ENCODE measurements at regions of chr3 and their contacts with region 1.

Region 1: DNA sequence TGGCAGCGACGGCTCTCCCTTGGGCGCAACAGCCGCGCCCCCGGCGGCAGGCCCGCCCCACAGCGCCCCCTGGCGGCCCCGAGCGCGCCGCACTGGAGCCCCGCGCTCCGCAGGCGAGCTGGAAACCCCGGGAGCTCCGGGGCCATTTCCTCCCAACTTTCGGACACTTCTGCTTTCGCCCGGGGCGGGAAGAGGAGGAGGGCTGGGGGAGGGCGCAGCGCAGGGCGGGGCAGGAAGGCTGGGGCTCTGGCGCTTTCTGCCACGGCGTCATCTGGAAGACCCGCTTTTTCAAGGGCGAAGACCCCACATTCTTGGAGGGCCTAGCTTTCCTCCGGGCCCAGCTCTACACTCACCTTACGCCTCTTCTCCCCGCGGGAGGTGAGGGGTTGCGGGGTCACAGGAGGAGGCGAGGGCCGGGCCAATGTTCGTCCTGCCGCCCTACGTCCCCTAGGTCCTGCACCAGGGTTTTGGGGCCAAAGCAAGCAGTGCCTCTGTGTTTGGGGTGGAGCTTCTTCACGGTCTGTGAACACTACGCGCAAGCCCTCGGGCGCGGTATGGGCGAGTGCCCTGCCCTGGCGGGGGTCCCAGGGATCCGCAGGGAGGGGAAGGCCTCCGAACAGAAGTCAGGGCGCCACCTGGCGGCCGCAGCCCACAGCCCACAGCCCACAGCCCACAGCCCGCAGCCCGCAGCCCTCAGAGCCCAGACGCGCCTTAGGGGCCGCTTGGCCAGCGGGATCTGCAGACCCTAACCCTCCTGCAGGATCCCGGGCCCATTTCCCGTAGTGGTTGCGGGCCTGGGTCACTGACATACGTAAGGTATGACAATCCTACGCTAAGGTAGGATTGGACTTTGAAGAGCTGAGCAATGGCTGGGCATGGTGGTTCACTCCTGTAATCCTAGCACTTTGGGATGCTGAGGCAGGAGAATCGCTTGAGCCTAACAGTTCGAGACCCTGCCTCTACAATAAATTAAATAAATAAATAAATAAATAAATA is 31.1 kb downstream of the FOXL2 start:
- DNase-seq: peak; percentile 95
- H3K4me3 ChIP-seq: peak overlapping the region; percentile 80
- H3K27ac ChIP-seq: peak overlapping the region; percentile 96
- H3K4me1 ChIP-seq: peaks cover 19% of the 10 kb centered on the region
- H3K27me3 ChIP-seq: no peaks in the 10 kb centered on the region
- CTCF ChIP-seq: peak; percentile 80

Region 2: GRCh38 chr3:138694287-138695007 is 221.4 kb before region 1 on chr3:
- intact Hi-C with region 1: loop called (anchors 5 kb)
- DNase-seq: no peak
- H3K4me3 ChIP-seq: no peak overlapping the region
- H3K27ac ChIP-seq: no peak overlapping the region
- H3K4me1 ChIP-seq: no peaks in the 10 kb centered on the region
- H3K27me3 ChIP-seq: no peaks in the 10 kb centered on the region
- CTCF ChIP-seq: no peak

Region 3: DNA sequence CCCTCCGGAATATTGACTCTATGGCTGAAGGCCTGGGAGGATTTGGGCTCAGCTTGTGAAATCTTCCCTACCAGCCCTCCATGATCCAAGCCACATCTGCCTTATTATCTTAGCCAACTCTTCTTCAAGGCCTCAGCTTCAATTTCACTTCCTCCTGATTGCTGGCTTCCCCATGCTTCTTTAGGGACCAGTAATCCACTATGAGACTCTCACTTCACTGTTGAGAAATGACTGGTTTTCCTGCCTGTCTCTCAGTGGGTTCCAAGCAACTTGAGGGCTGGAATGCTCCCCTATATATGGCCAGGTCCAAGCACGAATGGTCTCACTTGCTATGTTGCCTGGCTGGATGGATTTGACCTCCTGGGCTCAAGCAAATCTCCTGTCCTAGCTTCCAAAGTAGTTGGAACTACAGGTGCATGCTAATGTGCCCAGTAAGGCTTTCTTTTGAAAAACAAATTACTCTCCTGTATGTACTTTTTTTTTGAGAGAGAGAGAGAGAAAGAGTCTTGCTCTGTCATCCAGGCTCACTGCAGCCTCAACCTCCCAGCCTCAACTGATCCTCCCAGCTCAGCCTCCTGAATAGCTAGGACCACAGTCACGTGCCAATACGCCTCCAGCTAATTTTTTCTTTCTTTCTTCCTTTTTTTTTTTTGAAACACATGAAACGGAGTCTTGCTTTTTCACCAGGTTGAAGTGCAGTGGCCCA is 73.2 kb before region 1 on chr3:
- intact Hi-C with region 1: no loop called
- DNase-seq: no peak
- H3K4me3 ChIP-seq: no peak overlapping the region
- H3K27ac ChIP-seq: no peak overlapping the region
- H3K4me1 ChIP-seq: peaks cover 21% of the 10 kb centered on the region
- H3K27me3 ChIP-seq: no peaks in the 10 kb centered on the region
- CTCF ChIP-seq: no peak

Region 4: DNA sequence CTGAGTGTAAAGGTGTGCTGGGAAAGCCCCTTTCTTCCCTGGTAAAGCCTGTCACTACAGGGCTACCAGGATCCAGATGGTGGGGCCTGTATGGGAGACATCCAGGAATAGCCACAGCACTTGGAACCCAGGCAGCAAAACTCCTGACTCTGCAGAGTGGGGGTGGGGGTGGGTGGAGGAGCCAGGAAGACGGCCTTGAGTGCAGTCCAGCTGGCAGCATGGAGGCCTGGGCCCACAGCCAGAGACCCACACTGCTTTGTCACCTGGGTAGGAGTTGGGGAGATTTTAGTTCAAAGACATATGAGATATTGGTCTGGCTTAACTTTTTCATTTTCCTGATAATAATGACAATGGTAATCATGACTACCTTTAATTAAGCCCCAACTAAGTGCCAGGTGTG is 311.4 kb after region 1 on chr3:
- intact Hi-C with region 1: no loop called
- DNase-seq: peak; percentile 78
- H3K4me3 ChIP-seq: no peak overlapping the region
- H3K27ac ChIP-seq: peak overlapping the region; percentile 25
- H3K4me1 ChIP-seq: peaks cover 12% of the 10 kb centered on the region
- H3K27me3 ChIP-seq: peaks cover 3% of the 10 kb centered on the region
- CTCF ChIP-seq: no peak

Measured in left ventricle myocardium inferior (tissue), 1 donor.